ENCODE measurements at regions of chrX and their contacts with region 1.

Region 1: DNA sequence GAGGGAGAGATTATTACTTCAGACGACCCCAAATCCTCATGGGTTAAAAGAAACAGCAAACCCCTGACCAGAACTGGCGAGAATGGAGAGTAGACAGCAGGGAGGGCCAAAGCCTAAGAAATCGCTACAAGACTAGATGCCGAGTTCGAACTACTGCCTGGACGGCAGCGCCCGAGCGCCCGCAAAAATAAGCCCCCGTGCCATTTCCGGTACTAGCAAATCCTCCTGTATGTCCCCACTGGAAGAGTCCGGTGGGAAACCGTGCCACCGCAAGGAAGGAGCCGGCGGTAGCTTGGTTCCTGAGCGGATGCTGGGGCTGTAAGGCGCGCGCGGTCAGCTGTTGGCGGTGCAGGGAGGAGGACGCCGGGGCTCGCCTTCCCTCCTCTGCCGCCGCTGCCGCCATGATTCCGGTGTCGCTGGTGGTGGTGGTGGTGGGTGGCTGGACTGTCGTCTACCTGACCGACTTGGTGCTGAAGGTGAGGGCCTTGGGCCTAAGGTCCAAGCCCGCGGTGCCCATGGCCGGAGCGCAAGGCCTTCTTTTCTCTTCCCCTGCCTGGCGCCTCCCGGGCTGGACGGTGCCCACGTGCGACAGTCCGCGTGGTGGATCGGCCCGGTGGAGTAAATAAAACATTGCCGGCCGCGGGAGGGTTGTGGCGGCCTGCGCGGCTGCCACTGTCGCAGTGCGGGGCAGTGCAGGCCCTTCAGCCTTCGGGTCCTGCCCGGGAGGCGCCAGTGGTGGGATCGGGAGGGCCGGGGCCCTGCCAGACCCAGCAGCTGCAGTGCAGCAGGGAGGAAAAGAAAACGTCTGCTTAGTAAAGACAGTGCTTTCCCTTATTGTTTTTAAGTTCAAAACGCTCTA is at the start of gene MBTPS2:
- DNase-seq: peak; percentile 85
- ATAC-seq: peak; percentile 94
- H3K4me3 ChIP-seq: peak within 1 kb of the TSS; percentile 39 to 71 (median 69)
- H3K4me3 Mint-ChIP-seq: peak within 1 kb of the TSS; percentile 95
- H3K27ac ChIP-seq: peak within 1 kb of the TSS; percentile 60 to 70
- H3K27ac Mint-ChIP-seq: peak within 1 kb of the TSS; percentile 91
- H3K4me1 ChIP-seq: peaks cover 4 to 5% of the 10 kb centered on the region in 2 donors
- H3K4me1 Mint-ChIP-seq: peaks cover 13% of the 10 kb centered on the region
- H3K27me3 ChIP-seq: no peaks in the 10 kb centered on the region
- H3K27me3 Mint-ChIP-seq: no peaks in the 10 kb centered on the region
- CTCF ChIP-seq: no peak
- total RNA-seq, gene MBTPS2: 8.2 and 8.7 TPM in 2 replicates

Region 2: DNA sequence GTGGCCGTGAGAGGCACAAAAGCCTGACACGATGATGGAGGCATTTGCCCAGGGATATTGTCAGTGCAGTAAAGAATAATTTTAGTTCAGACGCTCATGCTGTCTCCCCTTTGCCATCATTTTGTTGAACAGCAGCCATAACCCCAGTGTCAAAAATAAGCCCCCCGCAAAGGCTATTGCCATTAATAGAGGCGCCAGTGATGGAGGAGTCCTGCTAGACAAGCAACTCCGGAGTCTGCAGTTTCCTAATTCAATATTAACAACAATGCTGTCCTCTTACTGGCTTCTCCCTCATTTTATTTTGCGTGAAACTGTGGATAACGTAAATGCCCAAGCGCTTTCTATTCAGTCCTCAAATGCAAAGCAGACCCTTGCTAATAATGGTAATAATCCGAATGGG is 100.3 kb after region 1 on chrX:
- CTCF ChIA-PET with region 1: no interaction called
- POLR2A ChIA-PET with region 1: no interaction called
- intact Hi-C with region 1: loop called (anchors 2 kb)
- DNase-seq: no peak
- ATAC-seq: no peak
- H3K4me3 ChIP-seq: peak overlapping the region in 4 of 5 experiments; percentile 28 to 66 (median 50)
- H3K4me3 Mint-ChIP-seq: peak overlapping the region; percentile 85
- H3K27ac ChIP-seq: peak overlapping the region; percentile 27 to 54
- H3K27ac Mint-ChIP-seq: peak overlapping the region; percentile 88
- H3K4me1 ChIP-seq: peaks cover 6 to 23% of the 10 kb centered on the region in 2 donors
- H3K4me1 Mint-ChIP-seq: peaks cover 28% of the 10 kb centered on the region
- H3K27me3 ChIP-seq: no peaks in the 10 kb centered on the region
- H3K27me3 Mint-ChIP-seq: no peaks in the 10 kb centered on the region
- CTCF ChIP-seq: no peak

Region 3: DNA sequence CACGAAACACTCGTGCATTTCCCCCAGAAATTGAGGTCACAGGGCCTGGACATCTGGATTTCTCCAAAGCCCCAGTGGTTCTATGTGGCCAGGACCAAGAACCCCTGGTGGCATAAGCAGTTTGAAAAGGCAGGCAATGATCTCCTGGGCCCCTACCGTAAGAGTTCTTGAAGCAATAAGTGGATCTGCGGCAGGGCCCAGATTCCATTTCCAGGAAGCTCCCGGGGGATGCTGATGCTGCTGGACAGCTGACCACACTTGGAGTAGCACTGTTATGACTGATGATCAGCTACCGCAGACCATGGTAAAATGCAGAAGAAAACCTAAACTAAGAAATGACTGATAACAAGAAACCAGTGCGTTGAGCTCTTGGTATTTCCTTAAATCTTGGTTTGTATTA is 128.8 kb after region 1 on chrX:
- CTCF ChIA-PET with region 1: no interaction called
- POLR2A ChIA-PET with region 1: no interaction called
- intact Hi-C with region 1: no loop called
- DNase-seq: no peak
- ATAC-seq: no peak
- H3K4me3 ChIP-seq: no peak overlapping the region
- H3K4me3 Mint-ChIP-seq: no peak overlapping the region
- H3K27ac ChIP-seq: no peak overlapping the region
- H3K27ac Mint-ChIP-seq: no peak overlapping the region
- H3K4me1 ChIP-seq: peaks cover 2 to 9% of the 10 kb centered on the region in 2 donors
- H3K4me1 Mint-ChIP-seq: peaks cover 14% of the 10 kb centered on the region
- H3K27me3 ChIP-seq: no peaks in the 10 kb centered on the region
- H3K27me3 Mint-ChIP-seq: no peaks in the 10 kb centered on the region
- CTCF ChIP-seq: no peak